K562 (cell line): ENCODE measurements at regions of chrX and their contacts with region 1.

Region 1: GRCh38 chrX:69222103-69223090 is 57.1 kb upstream of the PJA1 start:
- DNase-seq: peak; percentile 61 to 71 (median 68)
- ATAC-seq: peak; percentile 88
- H3K4me3 ChIP-seq: no peak overlapping the region
- H3K27ac ChIP-seq: no peak overlapping the region
- H3K4me1 ChIP-seq: no peaks in the 10 kb centered on the region
- H3K27me3 ChIP-seq: no peaks in the 10 kb centered on the region
- CTCF ChIP-seq: peak; percentile 65 to 79 (median 73)
- EP300 ChIP-seq: no peak
- POLR2A ChIP-seq: no peak
- RAD21 ChIP-seq: peak; percentile 68 to 74

Region 2: GRCh38 chrX:69093960-69094871 is 128.2 kb before region 1 on chrX:
- CTCF ChIA-PET with region 1: interaction called, 9 read pairs
- POLR2A ChIA-PET with region 1: no interaction called
- in situ Hi-C with region 1: loop called (anchors 10 kb)
- intact Hi-C with region 1: loop called (anchors 5 kb)
- DNase-seq: peak; percentile 61 to 65 (median 64)
- ATAC-seq: peak; percentile 92
- H3K4me3 ChIP-seq: no peak overlapping the region
- H3K27ac ChIP-seq: no peak overlapping the region
- H3K4me1 ChIP-seq: peaks cover 0 to 4% of the 10 kb centered on the region in 2 experiments; a peak in 2 of 5 replicates
- H3K27me3 ChIP-seq: no peaks in the 10 kb centered on the region; a peak in 1 of 5 replicates
- CTCF ChIP-seq: peak; percentile 48 to 65 (median 52)
- EP300 ChIP-seq: no peak
- POLR2A ChIP-seq: no peak
- RAD21 ChIP-seq: peak; percentile 20 to 57; a peak in 3 of 4 replicates

Region 3: DNA sequence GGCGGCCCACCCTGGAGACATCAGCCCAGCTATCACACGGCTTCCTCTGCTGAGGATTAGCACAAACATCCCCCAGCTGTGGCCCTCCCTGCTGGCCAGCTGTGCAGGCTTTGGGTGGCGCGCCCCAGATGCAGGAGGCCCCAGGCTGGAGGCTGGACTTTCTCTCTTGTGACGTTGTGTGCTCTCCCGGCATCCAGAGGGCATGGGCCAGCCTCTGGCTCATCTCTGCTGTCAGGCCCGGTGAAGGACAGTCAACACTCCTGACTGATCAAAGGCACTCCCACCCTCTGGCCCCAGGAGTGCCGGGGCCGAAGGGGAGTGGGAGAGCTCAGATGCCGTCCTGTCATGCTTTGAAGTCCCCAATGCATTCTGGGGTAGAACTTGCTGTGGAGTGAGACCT is 27.2 kb before region 1 on chrX:
- CTCF ChIA-PET with region 1: no interaction called
- POLR2A ChIA-PET with region 1: no interaction called
- in situ Hi-C with region 1: no loop called
- intact Hi-C with region 1: no loop called
- DNase-seq: no peak
- ATAC-seq: no peak
- H3K4me3 ChIP-seq: no peak overlapping the region
- H3K27ac ChIP-seq: no peak overlapping the region
- H3K4me1 ChIP-seq: no peaks in the 10 kb centered on the region
- H3K27me3 ChIP-seq: no peaks in the 10 kb centered on the region
- CTCF ChIP-seq: no peak
- EP300 ChIP-seq: no peak
- POLR2A ChIP-seq: no peak
- RAD21 ChIP-seq: no peak

Region 4: GRCh38 chrX:69285881-69286564 is 63.6 kb after region 1 on chrX:
- CTCF ChIA-PET with region 1: interaction called, 3 read pairs
- POLR2A ChIA-PET with region 1: no interaction called
- in situ Hi-C with region 1: no loop called
- intact Hi-C with region 1: loop called (anchors 5 kb)
- DNase-seq: peak; percentile 53 to 81 (median 74)
- ATAC-seq: peak; percentile 96
- H3K4me3 ChIP-seq: no peak overlapping the region
- H3K27ac ChIP-seq: no peak overlapping the region
- H3K4me1 ChIP-seq: peaks cover 0 to 7% of the 10 kb centered on the region in 2 experiments; a peak in 2 of 5 replicates
- H3K27me3 ChIP-seq: peaks cover 0 to 6% of the 10 kb centered on the region in 2 experiments; a peak in 1 of 5 replicates
- CTCF ChIP-seq: peak; percentile 63 to 81 (median 74)
- EP300 ChIP-seq: no peak
- POLR2A ChIP-seq: no peak
- RAD21 ChIP-seq: peak; percentile 53 to 68